ENCODE measurements at regions of chr17 and their contacts with region 1.

Region 1: DNA sequence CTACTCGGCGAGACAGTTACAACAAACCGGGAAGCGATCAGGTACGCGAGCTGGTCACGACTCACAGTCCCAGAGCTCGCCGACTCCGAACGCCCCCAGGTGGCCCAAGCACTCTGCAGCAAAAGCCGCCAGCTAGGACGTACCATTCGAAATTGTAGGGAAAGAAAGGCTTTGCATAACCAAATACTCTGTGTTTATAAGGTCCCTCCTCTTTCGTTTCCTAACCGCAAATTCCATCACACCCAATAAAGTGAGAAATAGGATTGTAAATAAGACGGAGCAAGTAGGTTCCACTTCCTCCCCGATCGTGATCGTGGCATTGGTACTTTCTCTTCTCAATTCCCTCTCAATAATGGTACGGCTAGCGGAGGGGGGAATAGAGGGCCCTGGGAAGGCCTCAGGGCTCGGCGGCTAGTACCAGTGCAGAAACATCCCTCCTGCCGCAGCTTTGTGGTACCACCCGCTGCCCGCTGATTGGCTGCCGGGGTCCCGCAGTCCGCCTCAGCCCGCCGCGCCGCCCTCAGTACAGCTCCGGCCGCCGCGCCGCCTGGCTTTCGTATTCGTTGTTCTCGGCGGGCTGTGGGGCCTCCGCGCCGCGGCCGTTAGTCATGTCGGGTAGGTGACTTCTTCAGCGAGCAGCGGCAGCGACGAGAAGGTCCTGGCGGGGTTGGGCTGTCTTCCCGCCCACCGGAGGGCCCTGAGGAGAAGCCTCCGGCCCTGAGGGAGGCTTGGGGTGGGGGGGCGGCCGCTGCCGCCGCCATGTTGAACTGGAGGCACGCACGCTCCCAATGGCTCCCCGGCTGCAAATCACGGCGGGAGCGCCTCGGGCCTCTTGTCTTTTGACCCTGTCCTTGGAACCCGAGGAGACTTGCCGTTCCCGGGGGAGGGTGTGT is at the start of gene TAF15:
- DNase-seq: peak; percentile 85 to 97 (median 97)
- ATAC-seq: peak; percentile 97
- H3K4me3 ChIP-seq: peak within 1 kb of the TSS; percentile 91
- H3K4me3 Mint-ChIP-seq: peak within 1 kb of the TSS; percentile 86 to 99 (median 96)
- H3K27ac ChIP-seq: peak within 1 kb of the TSS; percentile 83
- H3K27ac Mint-ChIP-seq: peak within 1 kb of the TSS; percentile 91 to 99 (median 97)
- H3K4me1 ChIP-seq: peaks cover 33 to 37% of the 10 kb centered on the region in 2 donors
- H3K4me1 Mint-ChIP-seq: peaks cover 31 to 68% (median 57%) of the 10 kb centered on the region in 7 donors
- H3K27me3 ChIP-seq: no peaks in the 10 kb centered on the region
- H3K27me3 Mint-ChIP-seq: no peaks in the 10 kb centered on the region
- total RNA-seq, gene TAF15: 162 to 281 (median 243) TPM

Region 2: DNA sequence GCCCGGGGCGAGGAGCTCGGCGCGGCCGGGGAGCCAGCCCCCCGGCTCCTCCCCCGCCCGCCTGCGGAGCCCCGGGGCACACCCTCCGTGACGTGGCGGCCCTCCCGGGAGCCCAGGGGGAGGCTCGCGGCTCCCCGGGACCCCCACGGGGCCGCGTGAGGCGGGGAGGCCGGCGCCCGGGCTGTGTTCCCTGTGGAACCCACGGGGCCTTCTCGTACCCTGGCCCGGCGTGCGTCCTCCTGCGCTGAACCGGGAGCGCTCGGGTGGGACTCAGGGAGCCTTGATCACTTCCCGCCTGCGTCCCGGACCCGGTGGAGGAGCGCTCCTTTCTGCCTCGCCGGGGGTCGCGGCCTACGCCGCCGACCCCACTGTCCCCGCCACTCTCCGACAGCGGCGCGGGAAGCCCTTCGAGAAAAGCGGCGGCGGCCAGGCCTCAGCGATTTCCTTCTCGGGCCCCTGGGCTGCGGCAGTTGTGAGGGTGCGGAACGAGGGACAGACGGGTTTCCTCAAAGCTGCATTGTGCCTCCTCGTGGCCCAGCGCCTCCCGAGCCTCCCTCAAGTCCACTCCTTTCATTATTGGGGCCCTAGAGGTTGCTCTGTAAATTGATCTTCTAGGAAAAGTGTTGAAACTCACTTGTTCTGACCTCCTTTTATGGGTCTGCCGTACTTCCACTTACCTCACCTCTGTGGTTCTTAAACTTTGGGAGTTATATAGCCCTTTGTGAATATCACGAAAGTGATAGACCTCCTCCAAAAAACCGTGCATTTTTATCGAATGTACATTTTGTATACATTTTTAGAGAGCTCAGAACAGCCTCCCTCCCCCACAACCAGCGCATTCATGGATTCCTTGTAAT is 828.3 kb before region 1 on chr17:
- CTCF ChIA-PET with region 1: no interaction called
- POLR2A ChIA-PET with region 1: interaction called, 4 read pairs
- intact Hi-C with region 1: loop called (anchors 1 to 10 kb)
- DNase-seq: peak in 7 of 9 donors; percentile 65 to 87 (median 74)
- ATAC-seq: peak; percentile 91
- H3K4me3 ChIP-seq: peak overlapping the region; percentile 68
- H3K4me3 Mint-ChIP-seq: peak overlapping the region; percentile 87 to 97 (median 94)
- H3K27ac ChIP-seq: peak overlapping the region; percentile 99
- H3K27ac Mint-ChIP-seq: peak overlapping the region; percentile 91 to 98 (median 97)
- H3K4me1 ChIP-seq: peaks cover 17 to 26% of the 10 kb centered on the region in 2 donors
- H3K4me1 Mint-ChIP-seq: peaks cover 36 to 57% (median 53%) of the 10 kb centered on the region in 7 donors
- H3K27me3 ChIP-seq: no peaks in the 10 kb centered on the region
- H3K27me3 Mint-ChIP-seq: no peaks in the 10 kb centered on the region

Region 3: DNA sequence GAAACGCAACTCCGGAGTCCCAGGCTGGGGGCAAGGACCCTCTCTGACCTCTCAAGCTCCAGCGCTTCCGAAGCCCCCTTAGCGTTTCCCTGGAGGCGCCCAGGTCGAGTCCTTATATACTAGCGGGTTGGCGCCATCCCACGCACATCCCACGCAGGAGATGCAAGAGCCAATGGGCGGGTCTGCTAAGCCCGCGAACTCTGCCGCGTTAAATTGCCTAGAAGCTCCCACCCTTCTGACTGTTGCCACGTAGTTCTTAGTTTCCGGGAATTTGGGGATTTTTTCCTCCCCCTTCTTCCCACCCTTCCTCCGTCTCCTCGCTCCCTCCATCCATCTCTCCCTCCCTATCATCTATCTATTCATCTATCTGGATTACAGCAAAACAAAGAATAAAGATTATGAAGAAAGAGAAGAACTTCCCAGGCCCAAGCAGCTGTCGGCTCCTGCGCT is 435.6 kb before region 1 on chr17 and contains the start of gene SLFN11:
- CTCF ChIA-PET with region 1: no interaction called
- POLR2A ChIA-PET with region 1: no interaction called
- intact Hi-C with region 1: loop called in 1 of 2 experiments (anchors 10 kb)
- DNase-seq: peak; percentile 49 to 94 (median 80)
- ATAC-seq: peak; percentile 92
- H3K4me3 ChIP-seq: peak within 1 kb of the TSS; percentile 92
- H3K4me3 Mint-ChIP-seq: peak within 1 kb of the TSS; percentile 94 to 99 (median 98)
- H3K27ac ChIP-seq: peak within 1 kb of the TSS; percentile 99
- H3K27ac Mint-ChIP-seq: peak within 1 kb of the TSS; percentile 92 to 99 (median 99)
- H3K4me1 ChIP-seq: peaks cover 2 to 13% of the 10 kb centered on the region in 2 donors
- H3K4me1 Mint-ChIP-seq: peaks cover 23 to 74% (median 54%) of the 10 kb centered on the region in 7 donors
- H3K27me3 ChIP-seq: no peaks in the 10 kb centered on the region
- H3K27me3 Mint-ChIP-seq: peaks cover 0 to 8% (median 0%) of the 10 kb centered on the region in 5 donors
- total RNA-seq, gene SLFN11: 13.8 to 71.9 (median 29.7) TPM

Region 4: DNA sequence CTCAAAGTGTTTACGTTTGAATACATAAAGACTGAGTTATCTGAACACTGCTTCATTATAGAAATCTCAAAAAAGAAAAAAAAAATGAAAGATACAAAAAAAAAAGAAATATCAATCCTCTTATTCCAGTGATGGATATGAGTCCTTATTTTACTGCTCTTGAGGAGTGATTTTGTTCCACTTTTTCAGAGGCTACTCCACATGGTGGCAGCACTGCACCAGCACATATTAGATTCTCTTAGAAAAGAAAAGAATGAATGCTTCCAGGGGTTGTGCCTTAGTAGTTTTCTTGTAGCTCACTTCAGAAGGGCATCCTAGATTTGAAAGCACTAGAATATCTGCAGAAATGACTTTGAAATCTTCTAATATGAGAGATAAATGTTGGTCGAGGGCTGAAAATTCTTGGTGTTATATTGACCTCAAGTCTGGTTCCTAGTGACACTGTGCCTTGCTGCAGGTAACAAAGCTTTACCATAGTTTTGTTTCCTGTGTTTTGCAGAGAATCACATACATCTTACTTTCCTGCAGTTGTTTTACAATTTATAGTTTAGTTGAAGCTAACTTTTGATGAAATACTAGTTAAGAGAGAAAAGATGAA is 196.2 kb before region 1 on chr17:
- CTCF ChIA-PET with region 1: interaction called, 6 read pairs
- POLR2A ChIA-PET with region 1: interaction called, 6 read pairs
- intact Hi-C with region 1: loop called (anchors 1 to 2 kb)
- DNase-seq: peak in 6 of 9 donors; percentile 21 to 50 (median 31)
- ATAC-seq: peak; percentile 67
- H3K4me3 ChIP-seq: no peak overlapping the region
- H3K4me3 Mint-ChIP-seq: no peak overlapping the region
- H3K27ac ChIP-seq: no peak overlapping the region
- H3K27ac Mint-ChIP-seq: no peak overlapping the region
- H3K4me1 ChIP-seq: no peaks in the 10 kb centered on the region
- H3K4me1 Mint-ChIP-seq: peaks cover 0 to 9% (median 5%) of the 10 kb centered on the region in 7 donors
- H3K27me3 ChIP-seq: no peaks in the 10 kb centered on the region
- H3K27me3 Mint-ChIP-seq: no peaks in the 10 kb centered on the region

Region 5: DNA sequence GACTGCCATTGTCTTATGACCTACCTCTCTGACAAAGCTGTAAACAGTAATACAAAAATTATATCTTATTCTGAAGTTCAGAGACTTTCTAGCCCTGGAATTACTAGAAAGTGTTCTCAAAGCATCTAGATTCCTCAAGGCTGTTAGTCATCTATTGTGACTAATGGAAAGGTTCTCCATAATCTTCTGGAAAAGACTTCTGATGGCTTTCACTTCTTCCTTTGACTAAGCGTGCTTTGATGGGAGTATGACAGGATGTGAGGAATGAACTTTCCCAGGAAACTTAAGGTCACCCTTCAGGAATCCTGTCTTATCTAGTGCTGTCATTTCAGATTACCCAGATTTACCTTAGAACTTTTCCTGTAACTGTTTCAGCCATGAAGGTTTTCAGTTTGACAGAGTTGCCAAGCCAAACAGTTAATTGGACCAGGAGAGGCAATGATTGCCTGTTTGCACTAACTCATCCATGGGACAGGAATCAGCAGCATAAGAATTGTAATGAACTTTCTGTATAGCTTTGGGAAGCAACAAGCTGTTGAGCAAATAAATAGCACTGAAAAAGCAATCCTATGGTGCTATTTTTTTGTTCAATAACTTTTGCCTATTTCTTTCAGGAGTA is 178.6 kb before region 1 on chr17:
- CTCF ChIA-PET with region 1: no interaction called
- POLR2A ChIA-PET with region 1: no interaction called
- intact Hi-C with region 1: no loop called
- DNase-seq: no peak
- ATAC-seq: no peak
- H3K4me3 ChIP-seq: no peak overlapping the region
- H3K4me3 Mint-ChIP-seq: no peak overlapping the region
- H3K27ac ChIP-seq: no peak overlapping the region
- H3K27ac Mint-ChIP-seq: no peak overlapping the region
- H3K4me1 ChIP-seq: no peaks in the 10 kb centered on the region
- H3K4me1 Mint-ChIP-seq: peaks cover 0 to 6% (median 0%) of the 10 kb centered on the region in 7 donors
- H3K27me3 ChIP-seq: no peaks in the 10 kb centered on the region
- H3K27me3 Mint-ChIP-seq: no peaks in the 10 kb centered on the region

Region 6: GRCh38 chr17:35794988-35795824 is 14.0 kb before region 1 on chr17 and contains the start of gene MMP28:
- CTCF ChIA-PET with region 1: interaction called, 41 read pairs
- POLR2A ChIA-PET with region 1: interaction called, 34 read pairs
- intact Hi-C with region 1: loop called in 1 of 2 experiments (anchors 1 kb)
- DNase-seq: peak; percentile 20 to 68 (median 39)
- ATAC-seq: peak; percentile 81
- H3K4me3 ChIP-seq: peak within 1 kb of the TSS; percentile 33
- H3K4me3 Mint-ChIP-seq: peak within 1 kb of the TSS; percentile 79 to 90 (median 85)
- H3K27ac ChIP-seq: peak within 1 kb of the TSS; percentile 4
- H3K27ac Mint-ChIP-seq: peak within 1 kb of the TSS in 8 of 9 donors; percentile 6 to 84 (median 49)
- H3K4me1 ChIP-seq: peaks cover 4 to 21% of the 10 kb centered on the region in 2 donors
- H3K4me1 Mint-ChIP-seq: peaks cover 7 to 66% (median 45%) of the 10 kb centered on the region in 7 donors
- H3K27me3 ChIP-seq: no peaks in the 10 kb centered on the region
- H3K27me3 Mint-ChIP-seq: peaks cover 0 to 87% (median 22%) of the 10 kb centered on the region in 5 donors
- total RNA-seq, gene MMP28: 2.9 to 15.1 (median 14.0) TPM in 4 of 5 experiments, not detected in the other

Region 7: GRCh38 chr17:36001862-36002603 is 192.8 kb after region 1 on chr17:
- CTCF ChIA-PET with region 1: no interaction called
- POLR2A ChIA-PET with region 1: no interaction called
- intact Hi-C with region 1: no loop called
- DNase-seq: no peak
- ATAC-seq: no peak
- H3K4me3 ChIP-seq: no peak overlapping the region
- H3K4me3 Mint-ChIP-seq: no peak overlapping the region
- H3K27ac ChIP-seq: no peak overlapping the region
- H3K27ac Mint-ChIP-seq: no peak overlapping the region
- H3K4me1 ChIP-seq: peaks cover 0 to 13% of the 10 kb centered on the region in 2 donors
- H3K4me1 Mint-ChIP-seq: peaks cover 0 to 7% (median 6%) of the 10 kb centered on the region in 7 donors
- H3K27me3 ChIP-seq: no peaks in the 10 kb centered on the region
- H3K27me3 Mint-ChIP-seq: peaks cover 0 to 21% (median 0%) of the 10 kb centered on the region in 5 donors

Region 8: DNA sequence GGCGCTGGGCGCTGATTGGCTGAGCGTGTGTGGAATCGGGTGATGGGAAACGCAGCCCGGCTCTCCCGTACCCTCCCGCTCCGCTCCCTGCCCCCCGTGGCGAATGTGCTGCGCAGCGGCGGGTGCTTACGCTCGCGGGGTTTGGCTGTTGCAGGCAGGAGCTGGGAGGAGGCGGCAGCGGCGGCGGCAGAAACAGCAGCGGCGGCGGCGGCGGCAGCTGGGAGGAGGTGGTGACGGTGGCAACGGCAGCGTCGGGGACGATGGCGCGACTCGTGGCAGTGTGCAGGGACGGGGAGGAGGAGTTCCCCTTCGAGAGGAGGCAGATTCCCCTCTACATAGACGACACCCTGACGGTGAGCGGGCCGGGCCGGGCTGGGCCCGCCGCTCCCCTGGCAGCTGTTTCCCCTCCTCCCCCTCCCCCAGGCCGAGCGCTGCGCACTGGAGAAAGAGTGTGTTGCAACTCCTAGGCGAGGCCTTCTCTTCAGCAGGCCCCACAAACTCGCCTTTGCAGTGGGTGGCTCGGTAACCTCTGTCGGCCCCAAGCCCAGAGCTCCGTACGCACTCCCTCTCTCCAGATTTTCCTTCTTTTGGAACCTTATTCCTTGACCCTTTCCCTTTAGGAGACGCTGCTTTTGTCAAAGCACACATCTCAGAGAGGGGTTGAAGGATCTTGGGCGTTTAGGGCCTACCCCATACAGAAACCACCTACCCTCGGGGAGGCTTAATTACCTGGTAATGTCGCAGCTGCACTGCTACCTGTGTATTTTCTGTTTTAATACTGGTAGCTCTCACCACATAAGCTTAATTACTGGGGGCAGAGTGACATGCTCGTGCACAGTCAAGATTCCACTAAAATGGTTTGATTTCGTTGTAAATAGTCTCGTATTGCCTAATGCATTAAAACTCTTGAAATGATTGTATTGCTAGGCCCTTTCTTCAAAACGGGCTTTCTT is 736.5 kb after region 1 on chr17:
- CTCF ChIA-PET with region 1: no interaction called
- POLR2A ChIA-PET with region 1: interaction called, 4 read pairs
- intact Hi-C with region 1: loop called in 1 of 2 experiments (anchors 5 kb)
- DNase-seq: peak; percentile 95 to 98 (median 98)
- ATAC-seq: peak; percentile 87
- H3K4me3 ChIP-seq: peak overlapping the region; percentile 93
- H3K4me3 Mint-ChIP-seq: peak overlapping the region; percentile 87 to 97 (median 94)
- H3K27ac ChIP-seq: peak overlapping the region; percentile 94
- H3K27ac Mint-ChIP-seq: peak overlapping the region; percentile 90 to 96 (median 94)
- H3K4me1 ChIP-seq: peaks cover 40 to 44% of the 10 kb centered on the region in 2 donors
- H3K4me1 Mint-ChIP-seq: peaks cover 13 to 57% (median 44%) of the 10 kb centered on the region in 7 donors
- H3K27me3 ChIP-seq: no peaks in the 10 kb centered on the region
- H3K27me3 Mint-ChIP-seq: no peaks in the 10 kb centered on the region

Measured in naive thymus-derived CD4-positive, alpha-beta T cell (primary cell).